Activated CD4-positive, alpha-beta T cell treated with anti-CD3 and anti-CD28 coated beads for 36 hours (primary cell): ENCODE measurements at regions of chr11 and their contacts with region 1.

Region 1: GRCh38 chr11:128482512-128483191 is 104.7 kb downstream of the ETS1 start:
- DNase-seq: peak; percentile 75
- ATAC-seq: peak; percentile 71
- H3K4me3 Mint-ChIP-seq: peak overlapping the region; percentile 63
- H3K27ac Mint-ChIP-seq: peak overlapping the region; percentile 98
- H3K4me1 Mint-ChIP-seq: peaks cover 96% of the 10 kb centered on the region
- H3K27me3 Mint-ChIP-seq: no peaks in the 10 kb centered on the region

Region 2: DNA sequence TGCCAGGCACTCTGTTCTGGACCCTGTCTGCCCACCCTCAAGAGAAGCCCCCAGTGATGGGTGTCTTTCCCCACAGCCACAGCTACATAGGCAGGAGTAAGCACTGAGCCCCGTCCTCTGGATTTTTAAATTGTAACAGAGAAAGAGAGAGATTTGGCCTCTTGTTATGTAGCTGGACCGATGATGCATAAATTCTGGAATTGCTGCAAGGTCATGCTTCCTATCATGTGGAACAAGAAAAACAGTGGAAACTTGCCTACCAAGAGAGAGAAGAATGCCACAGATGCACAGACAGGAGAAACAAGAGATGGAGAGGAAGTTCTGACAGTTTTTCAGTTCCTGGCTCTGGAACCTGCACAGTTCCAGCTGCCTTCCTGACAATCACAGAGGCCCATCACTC is 45.5 kb before region 1 on chr11:
- CTCF ChIA-PET with region 1: no interaction called
- POLR2A ChIA-PET with region 1: no interaction called
- intact Hi-C with region 1: no loop called
- DNase-seq: no peak
- ATAC-seq: no peak
- H3K4me3 Mint-ChIP-seq: no peak overlapping the region
- H3K27ac Mint-ChIP-seq: no peak overlapping the region
- H3K4me1 Mint-ChIP-seq: peaks cover 15% of the 10 kb centered on the region
- H3K27me3 Mint-ChIP-seq: no peaks in the 10 kb centered on the region

Region 3: DNA sequence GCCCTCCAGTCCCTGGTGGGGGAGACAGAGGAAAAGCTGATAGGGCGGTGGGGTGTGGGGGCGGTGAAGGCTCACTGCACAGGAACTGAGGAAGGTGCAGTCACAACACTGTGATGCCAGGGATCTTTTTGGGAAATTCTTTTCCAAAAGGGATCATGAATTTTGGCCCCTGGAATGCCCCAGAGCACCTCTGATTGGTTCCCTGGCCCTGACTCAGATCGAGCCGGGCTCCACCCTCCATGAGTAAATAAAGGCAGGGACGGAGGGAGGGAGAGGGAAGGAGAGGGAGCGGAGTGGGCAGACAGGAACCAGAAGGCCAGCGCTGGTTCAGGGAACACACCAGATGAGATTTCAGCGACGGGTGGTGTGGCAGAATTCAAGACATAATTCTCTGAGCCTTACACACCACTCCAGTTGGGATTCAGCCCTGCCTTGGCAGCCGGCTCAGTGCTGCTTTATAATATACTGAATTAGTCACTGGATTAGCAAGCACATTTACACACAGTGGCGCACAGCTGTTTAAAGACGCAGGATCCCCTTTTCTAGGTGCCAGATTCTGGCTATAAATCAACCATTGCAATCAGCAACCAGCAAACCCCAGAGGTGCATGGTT is 24.5 kb after region 1 on chr11:
- CTCF ChIA-PET with region 1: interaction called, 9 read pairs
- POLR2A ChIA-PET with region 1: interaction called, 7 read pairs
- intact Hi-C with region 1: loop called in 1 of 2 experiments (anchors 2 kb)
- DNase-seq: peak; percentile 80
- ATAC-seq: peak; percentile 58
- H3K4me3 Mint-ChIP-seq: peak overlapping the region; percentile 96
- H3K27ac Mint-ChIP-seq: peak overlapping the region; percentile 98
- H3K4me1 Mint-ChIP-seq: peaks cover 89% of the 10 kb centered on the region
- H3K27me3 Mint-ChIP-seq: no peaks in the 10 kb centered on the region

Region 4: GRCh38 chr11:128593281-128593680 is 110.6 kb after region 1 on chr11:
- CTCF ChIA-PET with region 1: no interaction called
- POLR2A ChIA-PET with region 1: no interaction called
- intact Hi-C with region 1: no loop called
- DNase-seq: no peak
- ATAC-seq: no peak
- H3K4me3 Mint-ChIP-seq: no peak overlapping the region
- H3K27ac Mint-ChIP-seq: no peak overlapping the region
- H3K4me1 Mint-ChIP-seq: peaks cover 19% of the 10 kb centered on the region
- H3K27me3 Mint-ChIP-seq: peaks cover 2% of the 10 kb centered on the region